ENCODE measurements at regions of chr22 and their contacts with region 1.

Region 1: GRCh38 chr22:19387038-19387437 is 44.5 kb downstream of the HIRA start:
- DNase-seq: no peak
- ATAC-seq: no peak
- H3K4me3 ChIP-seq: no peak overlapping the region
- H3K27ac ChIP-seq: no peak overlapping the region
- H3K4me1 ChIP-seq: peaks cover 0 to 8% (median 0%) of the 10 kb centered on the region in 9 donors
- H3K27me3 ChIP-seq: no peaks in the 10 kb centered on the region
- CTCF ChIP-seq: no peak

Region 2: GRCh38 chr22:19341500-19341899 is 45.5 kb before region 1 on chr22:
- intact Hi-C with region 1: no loop called
- DNase-seq: no peak
- ATAC-seq: no peak
- H3K4me3 ChIP-seq: no peak overlapping the region
- H3K27ac ChIP-seq: no peak overlapping the region
- H3K4me1 ChIP-seq: no peaks in the 10 kb centered on the region
- H3K27me3 ChIP-seq: no peaks in the 10 kb centered on the region
- CTCF ChIP-seq: no peak

Region 3: GRCh38 chr22:19407649-19408606 is 20.9 kb after region 1 on chr22:
- intact Hi-C with region 1: no loop called
- DNase-seq: peak; percentile 30 to 50
- ATAC-seq: peak in 7 of 8 donors; percentile 4 to 54 (median 34)
- H3K4me3 ChIP-seq: no peak overlapping the region
- H3K27ac ChIP-seq: peak overlapping the region in 5 of 10 donors; percentile 38 to 60 (median 46)
- H3K4me1 ChIP-seq: peaks cover 0 to 54% (median 9%) of the 10 kb centered on the region in 9 donors
- H3K27me3 ChIP-seq: no peaks in the 10 kb centered on the region
- CTCF ChIP-seq: no peak

Region 4: GRCh38 chr22:19432133-19432851 is 45.3 kb after region 1 on chr22 and contains the start of gene MRPL40:
- intact Hi-C with region 1: no loop called
- DNase-seq: peak; percentile 95 to 96
- ATAC-seq: peak; percentile 96 to 98 (median 98)
- H3K4me3 ChIP-seq: peak within 1 kb of the TSS; percentile 65 to 94 (median 84)
- H3K27ac ChIP-seq: peak within 1 kb of the TSS; percentile 89 to 99 (median 98)
- H3K4me1 ChIP-seq: peaks cover 7 to 55% (median 34%) of the 10 kb centered on the region in 9 donors
- H3K27me3 ChIP-seq: no peaks in the 10 kb centered on the region
- CTCF ChIP-seq: peak in 3 of 9 donors; percentile 18 to 37 (median 29)
- total RNA-seq, gene MRPL40: 49.2 to 89.9 (median 54.9) TPM

Region 5: GRCh38 chr22:19463496-19464469 is 76.7 kb after region 1 on chr22:
- intact Hi-C with region 1: loop called in 1 of 10 experiments (anchors 10 kb)
- DNase-seq: peak; percentile 32 to 56
- ATAC-seq: peak; percentile 56 to 85 (median 66)
- H3K4me3 ChIP-seq: no peak overlapping the region
- H3K27ac ChIP-seq: peak overlapping the region in 1 of 10 donors; percentile 41
- H3K4me1 ChIP-seq: no peaks in the 10 kb centered on the region
- H3K27me3 ChIP-seq: no peaks in the 10 kb centered on the region
- CTCF ChIP-seq: no peak

Measured in heart right ventricle (tissue), 16 donors.